Activated CD4-positive, alpha-beta T cell treated with anti-CD3 and anti-CD28 coated beads, Interleukin-2, amount 10 ng/mL, durations not matched to agents 7 days and 5 days (primary cell): ENCODE measurements at regions of chr6 and their contacts with region 1.

Region 1: GRCh38 chr6:136289579-136290409 is at the start of gene BCLAF1:
- DNase-seq: peak; percentile 99
- H3K4me3 Mint-ChIP-seq: peak within 1 kb of the TSS; percentile 99
- H3K27ac Mint-ChIP-seq: peak within 1 kb of the TSS; percentile 100
- H3K4me1 Mint-ChIP-seq: peaks cover 50% of the 10 kb centered on the region
- H3K27me3 Mint-ChIP-seq: no peaks in the 10 kb centered on the region
- total RNA-seq, gene BCLAF1: 147 to 164 TPM

Region 2: GRCh38 chr6:136249811-136250685 is 39.7 kb before region 1 on chr6 and contains the start of gene MTFR2:
- CTCF ChIA-PET with region 1: interaction called, 5 read pairs
- POLR2A ChIA-PET with region 1: interaction called, 13 read pairs
- DNase-seq: peak; percentile 99
- H3K4me3 Mint-ChIP-seq: peak within 1 kb of the TSS; percentile 89
- H3K27ac Mint-ChIP-seq: peak within 1 kb of the TSS; percentile 89
- H3K4me1 Mint-ChIP-seq: peaks cover 58% of the 10 kb centered on the region
- H3K27me3 Mint-ChIP-seq: no peaks in the 10 kb centered on the region
- total RNA-seq, gene MTFR2: 23.9 to 26.3 TPM

Region 3: GRCh38 chr6:136315594-136315993 is 25.8 kb after region 1 on chr6:
- CTCF ChIA-PET with region 1: interaction called, 6 read pairs
- POLR2A ChIA-PET with region 1: interaction called, 13 read pairs
- DNase-seq: no peak
- H3K4me3 Mint-ChIP-seq: no peak overlapping the region
- H3K27ac Mint-ChIP-seq: no peak overlapping the region
- H3K4me1 Mint-ChIP-seq: peaks cover 3% of the 10 kb centered on the region
- H3K27me3 Mint-ChIP-seq: peaks cover 2% of the 10 kb centered on the region